ENCODE measurements at regions of chr19 and their contacts with region 1.

Region 1: GRCh38 chr19:2236314-2237050 is at the starts of genes PLEKHJ1 and SF3A2:
- DNase-seq: peak; percentile 94
- ATAC-seq: peak; percentile 55
- H3K4me3 ChIP-seq: peak within 1 kb of the TSS; percentile 98
- H3K27ac ChIP-seq: peak within 1 kb of the TSS; percentile 89
- H3K4me1 ChIP-seq: peaks cover 31% of the 10 kb centered on the region
- H3K27me3 ChIP-seq: no peaks in the 10 kb centered on the region
- CTCF ChIP-seq: peak; percentile 86
- total RNA-seq, gene PLEKHJ1: 94.8 and 108 TPM in 2 replicates
- total RNA-seq, gene SF3A2: 33.8 and 55.5 TPM in 2 replicates

Region 2: DNA sequence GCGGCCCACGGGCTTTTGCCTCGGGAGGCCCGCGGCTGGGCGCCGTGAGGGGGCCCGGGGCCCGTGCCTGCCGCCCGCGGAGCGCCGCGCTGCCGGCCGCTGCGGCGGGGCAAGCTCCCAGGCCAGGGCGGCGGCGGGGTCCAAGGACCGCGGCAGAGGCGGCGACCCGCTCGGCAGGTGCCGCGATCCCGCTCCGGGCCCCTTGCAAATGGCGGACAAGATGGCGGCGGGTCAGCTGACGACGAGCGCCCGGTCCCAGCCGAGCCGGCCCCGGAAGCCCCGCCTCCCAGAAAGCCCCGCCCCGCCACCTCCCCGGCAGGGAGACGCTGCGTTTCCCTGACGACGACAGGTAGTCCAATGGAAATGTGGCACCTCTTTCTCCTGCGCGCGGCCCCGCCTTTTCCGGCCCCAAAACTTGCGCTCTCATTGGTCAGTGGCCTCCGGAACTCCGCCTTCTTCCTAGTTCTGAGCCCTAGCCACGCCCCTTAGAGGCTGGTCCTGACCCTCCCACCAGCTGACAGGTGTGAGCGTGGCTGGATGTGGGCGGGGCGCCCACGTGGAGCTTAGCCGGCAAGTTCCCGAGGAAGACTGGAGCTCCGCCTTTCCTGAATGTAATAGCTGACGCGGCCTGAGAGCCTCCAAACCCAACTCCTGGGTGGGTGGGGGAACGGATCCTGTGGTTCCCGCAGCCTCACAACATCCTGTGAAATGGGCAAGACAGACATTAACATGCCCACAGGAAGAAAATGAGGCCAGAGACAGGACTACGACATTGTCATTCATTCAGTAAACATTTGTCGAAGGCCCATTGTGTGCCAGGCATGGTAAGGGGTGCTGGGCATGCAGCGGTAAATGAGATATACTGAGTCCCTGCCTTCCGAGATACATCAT is 84.9 kb before region 1 on chr19 and contains the start of gene AP3D1:
- CTCF ChIA-PET with region 1: interaction called, 13 read pairs
- POLR2A ChIA-PET with region 1: interaction called, 3 read pairs
- intact Hi-C with region 1: no loop called
- DNase-seq: peak; percentile 98
- ATAC-seq: peak; percentile 87
- H3K4me3 ChIP-seq: peak within 1 kb of the TSS; percentile 98
- H3K27ac ChIP-seq: peak within 1 kb of the TSS; percentile 64
- H3K4me1 ChIP-seq: peaks cover 13% of the 10 kb centered on the region
- H3K27me3 ChIP-seq: no peaks in the 10 kb centered on the region
- CTCF ChIP-seq: no peak
- total RNA-seq, gene AP3D1: 103 and 142 TPM in 2 replicates

Region 3: GRCh38 chr19:2168619-2169424 is 67.7 kb before region 1 on chr19:
- CTCF ChIA-PET with region 1: interaction called, 3 read pairs
- POLR2A ChIA-PET with region 1: no interaction called
- intact Hi-C with region 1: loop called (anchors 5 kb)
- DNase-seq: peak; percentile 97
- ATAC-seq: peak; percentile 81
- H3K4me3 ChIP-seq: peak overlapping the region; percentile 42; the same call in 1 of the 2 replicates
- H3K27ac ChIP-seq: peak overlapping the region; percentile 87
- H3K4me1 ChIP-seq: peaks cover 38% of the 10 kb centered on the region
- H3K27me3 ChIP-seq: no peaks in the 10 kb centered on the region
- CTCF ChIP-seq: no peak

Region 4: DNA sequence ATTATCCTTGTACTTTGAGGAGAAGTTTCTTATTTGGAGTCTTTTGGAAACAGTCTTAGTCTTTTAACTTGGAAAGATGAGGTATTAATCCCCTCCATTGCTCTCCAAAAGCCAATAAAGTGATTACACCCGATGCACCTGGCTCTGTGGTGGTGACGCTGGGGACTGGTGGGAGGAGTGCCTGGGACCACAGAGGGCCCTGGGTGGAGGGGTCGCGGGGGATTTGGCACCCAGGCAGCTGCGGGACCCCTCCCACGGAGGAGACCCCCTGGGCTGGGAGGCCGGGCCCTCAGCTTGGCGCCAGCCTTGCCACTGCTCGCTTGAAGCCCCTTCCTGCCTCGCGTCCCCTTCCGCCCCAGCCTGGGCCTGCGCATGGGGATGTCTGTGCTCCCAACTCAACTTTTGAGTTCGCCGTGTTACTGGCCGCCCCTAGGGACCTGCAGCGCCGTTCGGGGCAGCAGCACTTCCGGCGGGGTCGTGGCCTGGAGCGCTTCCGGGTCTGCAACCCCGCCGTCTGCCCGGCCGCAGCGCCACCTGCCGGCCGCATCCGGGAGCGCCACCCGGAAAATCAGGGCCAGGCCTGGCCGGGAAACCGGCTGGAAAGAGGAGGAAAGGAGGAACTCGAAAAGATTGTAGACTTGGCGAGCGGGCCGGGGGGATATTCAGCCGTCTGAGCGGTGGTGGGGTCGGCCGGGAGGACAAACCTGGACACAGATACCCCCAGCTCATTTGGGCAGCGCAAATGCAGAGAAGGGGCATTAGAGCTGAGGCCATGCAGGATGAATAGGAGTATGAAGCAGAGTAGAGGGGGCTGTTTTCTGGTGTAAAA is 37.1 kb after region 1 on chr19:
- CTCF ChIA-PET with region 1: no interaction called
- POLR2A ChIA-PET with region 1: no interaction called
- intact Hi-C with region 1: loop called (anchors 1 kb)
- DNase-seq: peak; percentile 66
- ATAC-seq: peak; percentile 40
- H3K4me3 ChIP-seq: peak overlapping the region; percentile 51
- H3K27ac ChIP-seq: 0 out of 2 replicates have a peak overlapping the region, but pooled peaks have one; percentile 21
- H3K4me1 ChIP-seq: peaks cover 19% of the 10 kb centered on the region
- H3K27me3 ChIP-seq: no peaks in the 10 kb centered on the region
- CTCF ChIP-seq: peak; percentile 82

Region 5: GRCh38 chr19:2315818-2316353 is 79.4 kb after region 1 on chr19:
- CTCF ChIA-PET with region 1: no interaction called
- POLR2A ChIA-PET with region 1: no interaction called
- intact Hi-C with region 1: loop called (anchors 10 kb)
- DNase-seq: peak; percentile 46
- ATAC-seq: peak; percentile 90
- H3K4me3 ChIP-seq: no peak overlapping the region
- H3K27ac ChIP-seq: no peak overlapping the region
- H3K4me1 ChIP-seq: no peaks in the 10 kb centered on the region
- H3K27me3 ChIP-seq: no peaks in the 10 kb centered on the region
- CTCF ChIP-seq: peak; percentile 67

Measured in PC-3 (cell line).